ENCODE measurements at regions of chr12 and their contacts with region 1.

Region 1: DNA sequence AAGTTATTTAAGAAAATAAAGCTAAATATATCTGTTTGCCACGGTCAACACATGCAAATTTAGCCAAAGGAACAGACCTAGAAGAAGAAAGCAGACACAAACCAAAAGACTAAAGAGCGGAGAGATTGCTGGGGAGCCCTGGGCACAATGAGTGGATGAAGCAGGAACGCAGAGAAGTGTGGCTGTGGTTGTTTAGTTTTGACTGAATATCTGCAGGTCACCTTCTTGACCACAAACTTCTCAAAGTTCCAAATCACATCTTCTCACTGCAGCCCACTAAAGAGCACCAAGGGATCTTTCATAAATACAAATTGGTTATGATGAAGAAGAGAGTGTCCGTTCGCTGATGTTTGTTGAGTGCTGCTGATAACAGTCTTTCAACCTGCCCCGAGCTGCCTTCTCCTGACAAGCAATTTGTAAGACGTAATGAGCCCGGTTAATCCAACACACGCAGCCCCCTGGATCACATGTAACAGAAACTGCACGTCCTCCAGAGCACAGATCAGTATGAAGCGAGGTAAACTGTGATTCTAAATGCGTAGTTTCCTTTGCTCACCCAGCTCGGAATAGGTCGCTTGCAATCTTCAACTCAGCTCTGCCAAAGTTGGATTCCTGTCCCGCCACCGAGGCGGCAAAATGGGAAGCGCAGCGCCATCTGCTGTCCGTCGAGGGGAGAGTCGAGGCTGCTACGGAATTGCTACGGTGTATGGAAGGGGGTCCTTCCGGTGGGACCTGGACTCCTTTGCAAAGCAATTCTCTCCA is 120.8 kb downstream of the GXYLT1 start:
- DNase-seq: peak; percentile 76 to 84
- H3K4me3 ChIP-seq: peak overlapping the region; percentile 27
- H3K4me3 Mint-ChIP-seq: peak overlapping the region; percentile 63
- H3K27ac Mint-ChIP-seq: no peak overlapping the region
- H3K4me1 ChIP-seq: no peaks in the 10 kb centered on the region
- H3K4me1 Mint-ChIP-seq: no peaks in the 10 kb centered on the region
- H3K27me3 ChIP-seq: peaks cover 2% of the 10 kb centered on the region
- H3K27me3 Mint-ChIP-seq: peaks cover 2% of the 10 kb centered on the region
- CTCF ChIP-seq: peak; percentile 95 to 98

Region 2: GRCh38 chr12:40946612-40947194 is 1077.2 kb before region 1 on chr12:
- CTCF ChIA-PET with region 1: interaction called, 7 read pairs
- POLR2A ChIA-PET with region 1: no interaction called
- intact Hi-C with region 1: loop called (anchors 2 kb)
- DNase-seq: no peak
- H3K4me3 ChIP-seq: no peak overlapping the region
- H3K4me3 Mint-ChIP-seq: no peak overlapping the region
- H3K27ac Mint-ChIP-seq: no peak overlapping the region
- H3K4me1 ChIP-seq: no peaks in the 10 kb centered on the region
- H3K4me1 Mint-ChIP-seq: no peaks in the 10 kb centered on the region
- H3K27me3 ChIP-seq: no peaks in the 10 kb centered on the region
- H3K27me3 Mint-ChIP-seq: no peaks in the 10 kb centered on the region
- CTCF ChIP-seq: peak; percentile 46 to 58

Region 3: DNA sequence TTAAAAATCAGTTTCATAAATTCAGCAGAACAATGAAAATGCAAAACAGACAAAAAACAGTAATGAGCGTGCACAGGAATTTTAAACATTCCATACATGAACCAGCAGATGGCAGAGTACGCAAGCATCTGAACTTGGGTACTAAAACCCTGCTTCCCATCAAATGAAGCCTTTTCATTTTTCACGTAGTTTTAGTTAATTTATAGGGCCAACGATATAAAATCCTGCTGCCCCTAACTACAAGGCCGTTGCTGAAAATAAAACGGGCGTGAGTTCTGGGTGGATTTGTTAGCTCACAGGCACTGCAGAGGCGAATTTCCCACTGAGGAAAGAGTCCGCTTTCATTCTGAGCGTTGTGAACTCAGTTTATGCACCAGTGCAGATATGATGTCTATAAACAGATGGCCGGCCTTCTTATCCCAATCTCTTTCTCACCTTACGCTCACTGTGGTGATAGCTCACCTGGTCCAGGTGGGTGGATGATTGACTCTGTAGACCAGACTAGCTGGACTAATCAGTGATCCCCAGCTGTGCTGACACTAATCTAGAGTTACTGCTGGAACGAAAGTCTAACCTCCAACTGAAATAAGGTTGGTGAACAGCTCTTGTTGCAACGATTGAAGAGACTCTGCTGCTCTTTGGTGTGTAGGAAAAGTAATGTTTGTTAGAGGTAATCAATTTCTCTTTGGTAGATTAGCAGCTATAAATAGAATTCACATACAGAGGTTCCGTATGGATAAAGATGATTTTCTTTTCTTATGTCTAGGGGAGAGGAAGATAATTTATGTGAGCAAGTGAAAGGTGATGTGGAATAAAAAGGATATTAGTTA is 746.6 kb before region 1 on chr12:
- CTCF ChIA-PET with region 1: no interaction called
- POLR2A ChIA-PET with region 1: no interaction called
- intact Hi-C with region 1: loop called (anchors 1 kb)
- DNase-seq: peak; percentile 35 to 36
- H3K4me3 ChIP-seq: no peak overlapping the region
- H3K4me3 Mint-ChIP-seq: no peak overlapping the region
- H3K27ac Mint-ChIP-seq: no peak overlapping the region
- H3K4me1 ChIP-seq: no peaks in the 10 kb centered on the region
- H3K4me1 Mint-ChIP-seq: no peaks in the 10 kb centered on the region
- H3K27me3 ChIP-seq: no peaks in the 10 kb centered on the region
- H3K27me3 Mint-ChIP-seq: no peaks in the 10 kb centered on the region
- CTCF ChIP-seq: peak; percentile 58 to 73

Region 4: DNA sequence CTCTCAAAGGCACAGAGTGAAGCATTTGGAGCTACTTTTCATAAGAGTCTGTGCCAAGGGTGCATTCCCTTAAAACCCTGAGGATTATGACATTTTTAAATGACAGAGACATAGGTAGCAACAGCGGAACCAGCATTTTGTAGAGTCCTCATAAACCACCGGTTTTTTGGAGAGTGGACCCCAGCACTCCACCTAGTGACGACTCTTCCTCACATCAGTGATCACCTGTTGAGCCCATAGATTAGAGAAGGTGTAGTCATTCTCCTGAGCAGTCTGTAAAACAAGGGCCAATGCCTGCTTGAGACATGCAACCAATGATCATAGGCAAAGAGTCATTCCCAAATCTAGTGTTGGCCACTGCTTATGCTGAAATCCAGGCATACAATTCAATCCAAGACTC is 278.3 kb before region 1 on chr12:
- CTCF ChIA-PET with region 1: interaction called, 4 read pairs
- POLR2A ChIA-PET with region 1: no interaction called
- intact Hi-C with region 1: loop called (anchors 5 kb)
- DNase-seq: no peak
- H3K4me3 ChIP-seq: no peak overlapping the region
- H3K4me3 Mint-ChIP-seq: no peak overlapping the region
- H3K27ac Mint-ChIP-seq: no peak overlapping the region
- H3K4me1 ChIP-seq: no peaks in the 10 kb centered on the region
- H3K4me1 Mint-ChIP-seq: no peaks in the 10 kb centered on the region
- H3K27me3 ChIP-seq: no peaks in the 10 kb centered on the region
- H3K27me3 Mint-ChIP-seq: no peaks in the 10 kb centered on the region
- CTCF ChIP-seq: no peak

Region 5: DNA sequence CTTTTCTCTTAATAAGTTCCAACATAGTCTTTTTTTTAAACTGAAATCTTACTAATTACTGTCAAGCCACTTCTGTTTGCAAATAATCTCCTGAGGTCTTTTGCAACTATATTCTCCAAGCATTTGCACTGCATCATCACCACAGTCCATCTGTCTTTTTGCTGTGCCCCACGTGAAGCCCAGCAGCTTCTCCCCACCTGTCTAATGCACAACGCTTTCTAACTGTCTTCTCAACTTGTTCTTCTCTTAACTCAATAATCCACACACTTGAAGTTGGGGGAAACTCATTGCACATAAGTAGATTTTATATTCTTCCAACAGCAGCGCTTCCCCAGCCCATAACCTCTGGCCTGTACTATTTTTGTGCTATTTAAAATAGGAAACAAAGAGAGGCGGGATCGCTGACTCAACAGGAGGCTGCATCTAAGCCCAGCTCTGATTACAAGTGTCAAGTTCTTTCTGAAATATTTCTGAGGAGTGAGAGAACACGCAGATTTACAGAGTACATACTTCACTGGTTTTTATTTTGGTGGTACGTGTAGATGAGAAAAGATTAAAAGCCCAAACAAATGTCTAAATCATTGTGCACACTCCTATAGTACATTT is 106.0 kb before region 1 on chr12:
- CTCF ChIA-PET with region 1: no interaction called
- POLR2A ChIA-PET with region 1: no interaction called
- intact Hi-C with region 1: loop called (anchors 5 kb)
- DNase-seq: no peak
- H3K4me3 ChIP-seq: no peak overlapping the region
- H3K4me3 Mint-ChIP-seq: no peak overlapping the region
- H3K27ac Mint-ChIP-seq: no peak overlapping the region
- H3K4me1 ChIP-seq: no peaks in the 10 kb centered on the region
- H3K4me1 Mint-ChIP-seq: no peaks in the 10 kb centered on the region
- H3K27me3 ChIP-seq: no peaks in the 10 kb centered on the region
- H3K27me3 Mint-ChIP-seq: peaks cover 19% of the 10 kb centered on the region
- CTCF ChIP-seq: no peak

Region 6: DNA sequence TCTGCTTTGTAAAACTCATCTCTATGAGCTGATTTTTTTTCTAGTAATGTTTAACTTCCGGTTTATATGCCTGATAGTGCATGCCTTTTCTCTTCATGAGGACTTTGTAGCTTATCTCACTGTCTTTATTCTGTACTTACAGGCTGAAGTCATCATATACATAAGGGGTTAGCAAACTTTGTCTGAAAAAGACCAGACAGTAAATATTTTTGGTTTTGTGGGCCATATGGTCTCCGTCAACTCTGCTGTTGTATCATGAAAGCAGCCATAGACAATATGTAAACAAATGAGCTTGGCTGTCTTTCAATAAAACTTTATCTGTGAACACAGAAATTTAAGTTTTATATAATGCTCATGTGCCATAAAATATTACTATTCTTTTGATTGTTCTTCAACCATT is 51.3 kb before region 1 on chr12:
- CTCF ChIA-PET with region 1: no interaction called
- POLR2A ChIA-PET with region 1: no interaction called
- intact Hi-C with region 1: no loop called
- DNase-seq: no peak
- H3K4me3 ChIP-seq: no peak overlapping the region
- H3K4me3 Mint-ChIP-seq: no peak overlapping the region
- H3K27ac Mint-ChIP-seq: no peak overlapping the region
- H3K4me1 ChIP-seq: peaks cover 3% of the 10 kb centered on the region; the same call in 1 of the 2 replicates
- H3K4me1 Mint-ChIP-seq: no peaks in the 10 kb centered on the region
- H3K27me3 ChIP-seq: no peaks in the 10 kb centered on the region
- H3K27me3 Mint-ChIP-seq: no peaks in the 10 kb centered on the region
- CTCF ChIP-seq: no peak

Region 7: GRCh38 chr12:42332301-42333285 is 308.7 kb after region 1 on chr12:
- CTCF ChIA-PET with region 1: no interaction called
- POLR2A ChIA-PET with region 1: no interaction called
- intact Hi-C with region 1: loop called (anchors 2 kb)
- DNase-seq: peak in 1 of 2 experiments; percentile 55
- H3K4me3 ChIP-seq: no peak overlapping the region
- H3K4me3 Mint-ChIP-seq: no peak overlapping the region
- H3K27ac Mint-ChIP-seq: no peak overlapping the region
- H3K4me1 ChIP-seq: peaks cover under 1% of the 10 kb centered on the region; the same call in 1 of the 2 replicates
- H3K4me1 Mint-ChIP-seq: peaks cover 13% of the 10 kb centered on the region
- H3K27me3 ChIP-seq: no peaks in the 10 kb centered on the region
- H3K27me3 Mint-ChIP-seq: no peaks in the 10 kb centered on the region
- CTCF ChIP-seq: peak; percentile 62 to 67